Gastrocnemius medialis (tissue), 4 donors: ENCODE measurements at regions of chr3 and their contacts with region 1.

Region 1: GRCh38 chr3:123559040-123559861 is 25.6 kb downstream of the HACD2 start:
- DNase-seq: no peak
- ATAC-seq: no peak
- H3K4me3 ChIP-seq: no peak overlapping the region
- H3K27ac ChIP-seq: no peak overlapping the region
- H3K4me1 ChIP-seq: no peaks in the 10 kb centered on the region
- H3K27me3 ChIP-seq: no peaks in the 10 kb centered on the region
- CTCF ChIP-seq: peak; percentile 56 to 88 (median 61)
- POLR2A ChIP-seq: no peak

Region 2: DNA sequence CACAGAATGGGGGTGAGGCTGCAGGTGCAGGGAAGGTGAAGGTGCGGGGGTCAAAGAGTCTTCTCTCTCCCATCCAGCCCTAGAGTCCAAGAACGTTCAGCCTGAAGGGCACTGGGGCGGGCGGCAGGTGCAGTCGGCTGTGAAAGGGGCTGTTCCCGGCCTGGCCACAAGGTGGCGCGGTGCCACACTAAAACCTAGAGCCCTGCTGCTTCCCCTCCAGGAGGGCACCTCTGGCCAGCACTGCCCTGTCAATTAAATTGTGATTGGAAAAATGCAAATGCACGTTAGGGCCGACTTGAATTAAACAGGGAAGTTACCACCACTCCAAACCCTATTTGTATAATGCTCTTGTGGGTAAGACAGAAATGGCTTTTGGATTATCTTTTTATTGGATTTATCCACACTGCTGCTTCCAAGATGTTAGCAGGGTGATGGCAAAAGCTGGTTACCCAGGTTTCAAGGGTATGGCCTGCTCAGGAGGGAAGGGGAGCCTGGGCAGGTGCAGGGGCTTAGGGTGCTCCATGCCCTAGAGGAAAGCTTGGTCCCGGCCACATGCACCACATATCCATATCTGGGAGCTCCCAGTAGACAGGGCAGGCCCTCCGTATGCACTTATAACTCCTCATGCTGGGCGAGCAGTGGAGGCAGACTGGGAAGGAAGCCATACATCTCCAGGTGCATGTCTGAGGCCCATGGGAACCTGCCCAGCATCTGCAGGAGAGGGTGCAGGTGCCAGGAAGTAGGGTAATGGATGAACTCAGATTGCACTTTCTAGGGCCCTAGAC is 230.2 kb before region 1 on chr3:
- in situ Hi-C with region 1: loop called (anchors 5 to 10 kb)
- intact Hi-C with region 1: loop called (anchors 2 kb)
- DNase-seq: peak; percentile 49 to 63
- ATAC-seq: peak; percentile 70 to 84
- H3K4me3 ChIP-seq: no peak overlapping the region
- H3K27ac ChIP-seq: no peak overlapping the region
- H3K4me1 ChIP-seq: no peaks in the 10 kb centered on the region
- H3K27me3 ChIP-seq: no peaks in the 10 kb centered on the region
- CTCF ChIP-seq: peak; percentile 75 to 95 (median 88)
- POLR2A ChIP-seq: no peak

Region 3: GRCh38 chr3:123335007-123335670 is 224.1 kb before region 1 on chr3:
- in situ Hi-C with region 1: loop called in 3 of 4 experiments (anchors 5 to 10 kb)
- intact Hi-C with region 1: no loop called
- DNase-seq: no peak
- ATAC-seq: no peak
- H3K4me3 ChIP-seq: no peak overlapping the region
- H3K27ac ChIP-seq: no peak overlapping the region
- H3K4me1 ChIP-seq: no peaks in the 10 kb centered on the region
- H3K27me3 ChIP-seq: no peaks in the 10 kb centered on the region
- CTCF ChIP-seq: no peak
- POLR2A ChIP-seq: no peak

Region 4: GRCh38 chr3:123449102-123449996 is 109.9 kb before region 1 on chr3:
- in situ Hi-C with region 1: no loop called
- intact Hi-C with region 1: loop called (anchors 5 kb)
- DNase-seq: no peak
- ATAC-seq: peak; percentile 38 to 51
- H3K4me3 ChIP-seq: peak overlapping the region; percentile 56 to 74 (median 64)
- H3K27ac ChIP-seq: peak overlapping the region; percentile 57 to 73 (median 64)
- H3K4me1 ChIP-seq: peaks cover 4 to 5% of the 10 kb centered on the region in 2 donors
- H3K27me3 ChIP-seq: peaks cover 14 to 35% (median 25%) of the 10 kb centered on the region in 3 donors
- CTCF ChIP-seq: no peak
- POLR2A ChIP-seq: no peak

Region 5: GRCh38 chr3:123642182-123642956 is 83.1 kb after region 1 on chr3:
- in situ Hi-C with region 1: no loop called
- intact Hi-C with region 1: no loop called
- DNase-seq: peak in 1 of 2 donors; percentile 24
- ATAC-seq: peak in 1 of 2 donors; percentile 21
- H3K4me3 ChIP-seq: no peak overlapping the region
- H3K27ac ChIP-seq: no peak overlapping the region
- H3K4me1 ChIP-seq: no peaks in the 10 kb centered on the region
- H3K27me3 ChIP-seq: no peaks in the 10 kb centered on the region
- CTCF ChIP-seq: peak; percentile 16 to 59 (median 39)
- POLR2A ChIP-seq: no peak

Region 6: DNA sequence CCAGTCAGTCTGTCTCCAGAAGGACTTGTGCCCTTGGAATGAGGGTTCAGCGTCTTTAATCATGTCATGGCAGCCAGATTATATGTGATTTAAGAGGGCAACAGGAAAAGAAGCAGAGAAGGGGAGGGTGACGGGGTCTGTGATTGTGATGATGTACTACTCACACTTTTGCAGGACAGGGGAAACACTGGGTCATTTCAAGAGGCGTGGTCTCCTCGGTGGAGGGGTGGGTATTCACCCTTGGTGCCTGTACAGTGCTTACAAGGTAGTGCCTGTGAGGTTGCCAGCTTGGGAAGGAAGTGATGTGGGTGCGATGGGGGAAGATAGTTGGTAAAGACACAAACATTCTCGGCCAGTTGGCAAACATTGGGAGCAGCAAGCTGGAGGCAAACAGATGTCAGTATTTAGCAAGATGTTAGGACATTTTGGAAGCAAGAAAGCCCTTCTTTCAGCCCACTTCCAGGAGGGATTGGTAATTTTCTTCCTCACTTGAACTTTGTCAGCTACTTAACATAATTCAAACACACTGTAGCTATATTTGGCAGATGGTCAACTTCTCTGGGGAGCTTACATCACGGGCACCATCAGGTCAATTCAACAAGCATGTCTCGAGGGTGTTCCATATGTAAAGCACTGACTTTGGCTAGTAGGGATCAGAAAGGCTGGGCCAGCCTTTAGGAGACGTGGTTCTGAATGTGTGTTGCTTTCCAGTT is 504.1 kb after region 1 on chr3:
- in situ Hi-C with region 1: no loop called
- intact Hi-C with region 1: no loop called
- DNase-seq: no peak
- ATAC-seq: peak in 1 of 2 donors; percentile 16
- H3K4me3 ChIP-seq: no peak overlapping the region
- H3K27ac ChIP-seq: no peak overlapping the region
- H3K4me1 ChIP-seq: peaks cover 4 to 30% of the 10 kb centered on the region in 2 donors
- H3K27me3 ChIP-seq: no peaks in the 10 kb centered on the region
- CTCF ChIP-seq: no peak
- POLR2A ChIP-seq: no peak